ENCODE measurements at regions of chr1 and their contacts with region 1.

Region 1: GRCh38 chr1:215526553-215527151 is 40.5 kb upstream of the KCTD3 start:
- DNase-seq: peak in 2 of 42 donors; percentile 9 to 26

Region 2: GRCh38 chr1:214649607-214650006 is 877.0 kb before region 1 on chr1:
- intact Hi-C with region 1: loop called (anchors 5 kb)
- DNase-seq: no peak

Measured in head of caudate nucleus (tissue), 42 donors.